Gastrocnemius medialis (tissue), 4 donors: ENCODE measurements at regions of chr10 and their contacts with region 1.

Region 1: GRCh38 chr10:110497438-110498086 is at the start of gene DUSP5:
- DNase-seq: peak; percentile 81 to 87
- ATAC-seq: peak; percentile 92 to 94
- H3K4me3 ChIP-seq: peak within 1 kb of the TSS; percentile 66 to 89 (median 83)
- H3K27ac ChIP-seq: peak within 1 kb of the TSS; percentile 67 to 83 (median 81)
- H3K4me1 ChIP-seq: peaks cover 8 to 18% of the 10 kb centered on the region in 2 donors
- H3K27me3 ChIP-seq: peaks cover 8 to 12% (median 8%) of the 10 kb centered on the region in 3 donors
- CTCF ChIP-seq: peak in 1 of 5 experiments; percentile 8
- POLR2A ChIP-seq: peak; percentile 83 to 96
- total RNA-seq, gene DUSP5: 0.75 to 2.8 (median 2.5) TPM in 3 of 4 donors, not detected in the other

Region 2: DNA sequence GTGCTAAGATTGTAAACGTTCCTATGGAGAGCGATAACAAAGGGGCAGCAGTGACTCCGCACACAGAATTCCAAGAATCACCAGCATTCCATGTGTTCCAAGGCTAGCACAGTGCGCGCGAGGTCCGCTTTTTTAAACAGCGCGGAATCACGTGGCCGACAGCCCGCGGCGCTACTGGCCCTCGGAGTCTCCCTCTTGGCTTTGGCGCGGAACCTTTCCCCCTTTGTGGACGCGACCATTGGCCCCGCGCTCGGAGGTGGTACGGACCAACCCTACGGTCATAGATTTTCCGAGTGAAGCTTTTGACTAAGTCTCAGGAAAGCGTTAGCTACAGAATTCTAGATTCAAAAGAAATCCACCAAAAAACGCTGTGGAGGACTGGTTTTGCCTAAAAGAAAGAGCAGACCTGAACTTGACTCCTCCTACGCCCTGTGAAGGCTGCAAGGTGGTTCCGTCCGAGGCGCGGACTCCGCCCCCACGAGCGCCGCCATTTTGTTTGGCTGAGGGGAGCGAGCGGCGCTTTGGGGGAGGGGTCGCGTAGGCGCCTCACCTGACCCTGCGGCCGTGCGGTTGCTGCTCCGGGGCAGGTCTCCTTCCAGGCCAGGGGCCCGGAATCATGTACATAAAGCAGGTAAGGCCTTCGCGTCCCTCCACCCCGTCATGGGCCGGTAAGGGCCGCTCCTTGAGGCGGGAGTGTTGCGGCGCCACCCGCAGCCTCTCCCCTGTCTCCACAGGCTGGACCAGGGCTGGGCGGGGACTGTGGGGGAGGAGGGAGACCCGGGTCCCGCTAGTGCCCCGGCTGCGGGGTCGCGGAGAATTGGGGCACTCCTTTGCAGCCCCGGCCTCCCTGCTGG is 69.9 kb after region 1 on chr10 and contains the start of gene SMC3:
- in situ Hi-C with region 1: no loop called
- intact Hi-C with region 1: loop called (anchors 1 kb)
- DNase-seq: peak; percentile 82 to 87
- ATAC-seq: peak; percentile 95 to 96
- H3K4me3 ChIP-seq: peak within 1 kb of the TSS; percentile 86 to 100 (median 93)
- H3K27ac ChIP-seq: peak within 1 kb of the TSS; percentile 93 to 99 (median 96)
- H3K4me1 ChIP-seq: peaks cover 36% of the 10 kb centered on the region in 2 donors
- H3K27me3 ChIP-seq: peaks cover 0 to 5% (median 2%) of the 10 kb centered on the region in 3 donors
- CTCF ChIP-seq: no peak
- POLR2A ChIP-seq: peak; percentile 63 to 65
- total RNA-seq, gene SMC3: 19.5 to 25.9 (median 21.9) TPM

Region 3: DNA sequence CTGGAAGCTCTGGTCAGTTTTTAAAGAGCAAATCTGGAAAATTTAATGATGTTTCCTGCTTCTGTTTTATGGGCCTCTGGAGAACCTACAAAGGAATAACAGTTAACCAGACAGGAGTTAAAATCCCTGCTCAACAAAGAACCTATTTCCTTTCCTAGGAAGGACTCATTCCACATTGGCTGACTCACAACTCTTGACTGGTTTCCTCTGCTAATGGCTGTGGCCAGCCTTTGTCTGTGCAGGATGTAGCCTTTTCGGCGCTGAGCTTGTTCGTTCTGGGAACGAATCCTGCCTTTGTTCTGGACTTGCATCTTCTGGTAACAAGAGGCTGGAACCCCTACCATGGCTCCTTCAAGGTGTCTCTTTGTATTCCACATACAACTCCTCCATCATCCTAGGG is 261.3 kb after region 1 on chr10:
- in situ Hi-C with region 1: no loop called
- intact Hi-C with region 1: no loop called
- DNase-seq: no peak
- ATAC-seq: peak in 1 of 2 donors; percentile 35
- H3K4me3 ChIP-seq: no peak overlapping the region
- H3K27ac ChIP-seq: peak overlapping the region; percentile 54 to 65 (median 59)
- H3K4me1 ChIP-seq: peaks cover 42 to 64% of the 10 kb centered on the region in 2 donors
- H3K27me3 ChIP-seq: no peaks in the 10 kb centered on the region
- CTCF ChIP-seq: no peak
- POLR2A ChIP-seq: no peak